ENCODE measurements at regions of chr22 and their contacts with region 1.

Region 1: DNA sequence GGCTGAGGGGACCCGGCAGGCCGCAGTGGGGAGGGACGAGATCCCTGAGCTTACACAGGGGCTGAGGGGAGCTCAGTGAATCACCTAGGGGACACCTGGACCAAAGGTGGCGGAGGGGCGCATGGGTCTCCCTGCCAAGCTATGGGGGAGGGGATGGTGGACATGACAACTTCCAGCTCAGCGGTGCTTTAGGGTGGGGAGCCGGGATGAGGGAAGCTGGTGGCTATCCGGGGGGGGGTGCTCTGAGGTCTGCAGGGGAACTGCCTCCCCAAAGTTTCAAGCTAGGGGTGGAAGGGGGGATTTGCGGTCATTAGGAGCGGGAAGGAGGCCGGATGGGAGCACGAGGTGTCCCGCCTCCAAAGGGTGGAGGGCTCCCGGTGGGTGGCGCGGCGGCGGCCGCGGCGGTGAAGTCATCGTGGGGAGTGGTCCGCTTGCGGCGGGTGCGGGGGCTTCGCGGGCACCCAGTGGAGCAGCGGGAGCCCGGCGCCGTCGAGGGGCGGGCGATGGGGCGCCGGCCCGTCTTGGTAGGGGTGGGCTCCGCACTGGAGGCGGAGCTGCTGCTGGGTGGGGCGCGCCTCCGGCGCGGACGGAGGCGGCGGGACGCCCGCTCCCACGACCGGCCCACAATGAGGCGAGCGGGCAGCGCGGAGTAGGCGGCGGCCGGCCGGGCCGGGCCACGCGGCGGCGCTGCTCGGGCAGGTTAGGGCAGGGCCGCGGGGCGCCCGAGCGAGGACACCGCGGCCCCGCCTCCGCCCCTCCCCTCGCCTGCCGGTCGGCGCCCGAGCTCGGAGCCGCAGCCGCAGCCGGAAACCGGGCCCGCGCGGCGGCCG is at the start of gene MICALL1:
- DNase-seq: peak; percentile 87
- H3K4me3 ChIP-seq: peak within 1 kb of the TSS; percentile 72 to 98 (median 88)
- H3K27ac ChIP-seq: peak within 1 kb of the TSS; percentile 88 to 97 (median 92)
- H3K4me1 ChIP-seq: peaks cover 0 to 61% (median 57%) of the 10 kb centered on the region in 4 donors
- H3K27me3 ChIP-seq: no peaks in the 10 kb centered on the region
- CTCF ChIP-seq: no peak
- EP300 ChIP-seq: no peak
- POLR2A ChIP-seq: no peak
- total RNA-seq, gene MICALL1: 23.9 to 109 (median 51.6) TPM

Region 2: GRCh38 chr22:37887610-37888378 is 18.0 kb before region 1 on chr22:
- intact Hi-C with region 1: loop called (anchors 2 kb)
- DNase-seq: peak; percentile 91
- H3K4me3 ChIP-seq: no peak overlapping the region
- H3K27ac ChIP-seq: peak overlapping the region; percentile 73 to 89 (median 83)
- H3K4me1 ChIP-seq: peaks cover 0 to 85% (median 71%) of the 10 kb centered on the region in 4 donors
- H3K27me3 ChIP-seq: no peaks in the 10 kb centered on the region
- CTCF ChIP-seq: peak in 3 of 4 experiments; percentile 56 to 59 (median 58)
- EP300 ChIP-seq: no peak
- POLR2A ChIP-seq: no peak

Region 3: DNA sequence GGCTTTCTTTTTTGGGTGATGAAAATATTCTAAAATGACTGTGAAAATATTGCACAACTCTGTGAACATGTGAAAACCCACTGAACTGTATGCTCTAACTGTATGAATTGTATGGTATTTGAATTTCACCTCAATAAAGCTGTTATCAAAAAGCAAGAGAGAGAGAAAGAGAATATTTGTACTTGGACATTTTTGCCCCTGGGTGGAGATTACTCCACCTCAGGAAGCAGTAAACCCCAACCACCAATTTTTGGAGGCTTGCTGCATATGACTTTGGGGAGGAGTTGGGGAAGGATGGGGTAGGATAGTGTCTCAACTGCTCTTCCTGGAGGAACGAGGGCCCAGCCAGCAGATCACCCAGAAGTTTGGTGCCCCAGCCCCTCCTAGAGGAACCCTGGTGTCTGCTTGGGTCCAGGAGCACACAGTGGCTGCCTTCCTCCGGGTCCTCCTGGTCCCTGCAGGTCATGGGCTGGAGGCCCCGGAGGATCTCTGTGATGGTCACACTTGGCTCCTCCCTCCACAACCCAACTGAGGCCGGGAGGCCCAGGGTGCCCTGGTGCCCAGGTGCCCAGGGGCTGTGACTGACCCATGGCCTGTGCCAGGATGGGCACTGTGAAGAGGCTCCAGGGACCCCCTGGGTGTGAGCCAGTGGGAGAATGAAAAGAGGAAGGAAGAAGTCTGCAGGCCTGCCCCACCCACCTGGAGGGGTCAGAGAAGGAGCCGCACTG is 136.2 kb after region 1 on chr22:
- intact Hi-C with region 1: no loop called
- DNase-seq: no peak
- H3K4me3 ChIP-seq: no peak overlapping the region
- H3K27ac ChIP-seq: peak overlapping the region in 3 of 4 donors; percentile 14 to 35 (median 17)
- H3K4me1 ChIP-seq: peaks cover 0 to 5% (median 0%) of the 10 kb centered on the region in 4 donors
- H3K27me3 ChIP-seq: no peaks in the 10 kb centered on the region
- CTCF ChIP-seq: no peak
- EP300 ChIP-seq: no peak
- POLR2A ChIP-seq: no peak

Region 4: GRCh38 chr22:38074181-38075104 is 168.7 kb after region 1 on chr22:
- intact Hi-C with region 1: no loop called
- DNase-seq: no peak
- H3K4me3 ChIP-seq: no peak overlapping the region
- H3K27ac ChIP-seq: no peak overlapping the region
- H3K4me1 ChIP-seq: peaks cover 0 to 15% (median 14%) of the 10 kb centered on the region in 4 donors
- H3K27me3 ChIP-seq: no peaks in the 10 kb centered on the region
- CTCF ChIP-seq: peak in 3 of 4 experiments; percentile 8 to 29 (median 13)
- EP300 ChIP-seq: no peak
- POLR2A ChIP-seq: no peak